ENCODE measurements at regions of chr6 and their contacts with region 1.

Region 1: DNA sequence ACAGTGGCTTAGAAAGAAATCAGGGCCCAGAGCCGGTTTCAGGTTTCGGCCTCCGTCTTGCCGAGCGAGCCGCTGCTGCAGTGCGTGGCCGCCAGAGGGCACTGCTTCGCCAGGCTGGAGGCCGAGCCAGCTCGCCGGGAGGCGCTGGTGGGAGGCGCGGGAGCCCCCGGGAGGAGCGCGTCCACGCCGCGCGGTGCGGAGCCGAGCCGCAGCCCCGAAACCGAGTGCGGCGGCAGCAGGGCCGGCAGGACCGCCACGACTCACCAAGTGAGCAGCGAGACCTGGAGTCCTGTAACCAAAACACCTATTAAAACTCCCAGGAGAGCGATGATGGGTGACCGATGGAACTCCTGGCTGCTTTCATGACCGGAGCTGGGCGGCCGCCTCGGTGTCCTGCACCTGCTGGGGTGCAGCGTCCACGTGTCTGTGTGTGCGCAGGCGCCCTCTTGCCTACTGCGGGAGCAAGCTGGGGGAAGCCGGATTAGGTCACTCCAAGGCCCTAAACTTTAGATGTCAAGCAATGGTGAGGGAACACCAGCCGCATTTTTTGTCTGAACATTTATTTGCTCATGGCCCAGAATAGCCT is 186.9 kb upstream of the UST start:
- H3K4me3 Mint-ChIP-seq: peak overlapping the region; percentile 51
- H3K27ac Mint-ChIP-seq: no peak overlapping the region
- H3K4me1 Mint-ChIP-seq: peaks cover 27% of the 10 kb centered on the region
- H3K27me3 Mint-ChIP-seq: peaks cover 18% of the 10 kb centered on the region

Region 2: GRCh38 chr6:148593130-148593812 is 33.3 kb after region 1 on chr6:
- intact Hi-C with region 1: no loop called
- H3K4me3 Mint-ChIP-seq: no peak overlapping the region
- H3K27ac Mint-ChIP-seq: no peak overlapping the region
- H3K4me1 Mint-ChIP-seq: peaks cover 5% of the 10 kb centered on the region
- H3K27me3 Mint-ChIP-seq: peaks cover 5% of the 10 kb centered on the region

Region 3: DNA sequence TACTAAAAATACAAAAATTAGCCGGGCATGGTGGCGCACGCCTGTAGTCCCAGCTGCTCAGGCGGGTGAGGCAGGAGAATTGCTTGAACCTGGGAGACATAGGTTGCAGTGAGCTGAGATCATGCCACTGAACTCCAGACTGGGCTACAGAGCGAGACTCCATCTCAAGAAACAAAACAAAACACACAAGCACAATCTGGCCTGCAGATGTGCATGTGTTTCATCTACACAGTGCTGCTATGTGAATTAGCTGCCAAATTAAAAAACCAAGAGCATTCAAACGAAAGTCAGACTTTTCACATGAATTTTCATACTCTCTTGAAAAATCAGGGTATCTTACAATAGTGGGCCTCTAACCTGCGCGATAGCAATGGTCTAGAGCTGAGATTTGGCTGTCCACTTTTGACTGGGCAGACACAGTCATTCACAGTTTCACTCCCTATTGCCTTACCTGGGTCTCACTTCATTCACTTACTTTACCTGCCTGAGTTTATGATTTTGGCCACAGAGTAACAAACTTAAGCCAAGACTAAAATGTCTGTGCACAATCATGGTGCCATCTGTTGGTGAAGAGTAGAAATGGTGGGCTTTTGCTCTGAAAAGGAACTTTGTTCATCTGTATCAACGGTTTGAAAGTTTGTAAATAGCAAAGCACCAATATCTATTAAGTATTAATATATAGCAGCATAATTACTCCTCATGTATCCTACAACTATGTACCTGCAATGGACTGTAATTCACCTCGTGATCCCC is 48.4 kb after region 1 on chr6:
- intact Hi-C with region 1: loop called (anchors 5 kb)
- H3K4me3 Mint-ChIP-seq: no peak overlapping the region
- H3K27ac Mint-ChIP-seq: no peak overlapping the region
- H3K4me1 Mint-ChIP-seq: peaks cover 14% of the 10 kb centered on the region
- H3K27me3 Mint-ChIP-seq: peaks cover 2% of the 10 kb centered on the region

Region 4: GRCh38 chr6:148682990-148683389 is 123.0 kb after region 1 on chr6:
- intact Hi-C with region 1: no loop called
- H3K4me3 Mint-ChIP-seq: peak overlapping the region; percentile 51
- H3K27ac Mint-ChIP-seq: peak overlapping the region; percentile 81
- H3K4me1 Mint-ChIP-seq: peaks cover 37% of the 10 kb centered on the region
- H3K27me3 Mint-ChIP-seq: no peaks in the 10 kb centered on the region

Measured in dendritic cell treated with granulocyte-macrophage colony-stimulating factor and Interleukin-4, amounts not matched to agents 40 ng/mL and 50 ng/mL, for 4 days (primary cell).